ENCODE measurements at regions of chr1 and their contacts with region 1.

Region 1: GRCh38 chr1:89286549-89287180 is 14.0 kb upstream of the GBP5 start:
- DNase-seq: peak; percentile 33
- ATAC-seq: peak; percentile 69
- H3K4me3 Mint-ChIP-seq: peak overlapping the region; percentile 39
- H3K27ac Mint-ChIP-seq: peak overlapping the region; percentile 87
- H3K4me1 Mint-ChIP-seq: peaks cover 71% of the 10 kb centered on the region
- H3K27me3 Mint-ChIP-seq: no peaks in the 10 kb centered on the region
- CTCF ChIP-seq: no peak

Region 2: DNA sequence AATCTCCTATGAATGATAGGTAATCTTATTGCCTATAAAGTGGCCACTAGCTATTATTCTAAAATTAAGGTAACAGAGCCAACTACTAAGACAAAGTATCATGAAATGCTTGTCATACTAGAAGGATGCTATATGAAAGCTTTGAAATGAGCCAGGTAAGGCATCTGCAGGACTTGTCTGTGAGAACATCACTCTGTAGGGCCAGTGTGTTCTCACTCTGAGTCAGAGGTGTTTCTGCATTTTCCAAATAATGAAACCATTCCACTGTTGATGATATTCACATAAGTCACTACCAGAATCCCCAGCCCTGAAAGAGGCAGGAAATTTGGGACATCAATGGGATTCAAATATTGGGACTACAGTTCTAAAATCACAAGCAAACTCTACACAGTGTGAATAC is 11.8 kb after region 1 on chr1:
- CTCF ChIA-PET with region 1: interaction called, 4 read pairs
- POLR2A ChIA-PET with region 1: interaction called, 19 read pairs
- intact Hi-C with region 1: no loop called
- DNase-seq: no peak
- ATAC-seq: peak; percentile 34
- H3K4me3 Mint-ChIP-seq: no peak overlapping the region
- H3K27ac Mint-ChIP-seq: no peak overlapping the region
- H3K4me1 Mint-ChIP-seq: peaks cover 64% of the 10 kb centered on the region
- H3K27me3 Mint-ChIP-seq: no peaks in the 10 kb centered on the region
- CTCF ChIP-seq: no peak

Region 3: DNA sequence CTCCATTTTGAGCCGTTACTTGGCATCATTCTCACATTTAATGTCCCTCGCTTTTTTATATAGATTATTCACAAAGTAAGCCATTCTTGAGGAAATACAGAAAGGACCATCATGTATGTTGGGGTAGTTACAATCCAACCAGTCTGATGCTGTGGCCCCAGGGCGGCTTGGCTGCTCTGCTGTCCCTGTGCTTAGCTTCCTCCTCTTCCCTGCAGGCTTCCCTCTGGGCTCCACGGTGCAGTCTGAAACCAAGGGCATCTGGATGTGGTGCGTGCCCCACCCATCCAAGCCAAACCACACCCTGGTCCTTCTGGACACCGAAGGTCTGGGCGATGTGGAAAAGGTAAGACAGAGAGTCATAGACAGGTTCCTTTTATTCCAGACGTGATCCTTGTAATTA is 82.7 kb after region 1 on chr1:
- CTCF ChIA-PET with region 1: no interaction called
- POLR2A ChIA-PET with region 1: no interaction called
- intact Hi-C with region 1: no loop called
- DNase-seq: no peak
- ATAC-seq: no peak
- H3K4me3 Mint-ChIP-seq: no peak overlapping the region
- H3K27ac Mint-ChIP-seq: no peak overlapping the region
- H3K4me1 Mint-ChIP-seq: peaks cover 4% of the 10 kb centered on the region
- H3K27me3 Mint-ChIP-seq: no peaks in the 10 kb centered on the region
- CTCF ChIP-seq: no peak